ENCODE measurements at regions of chr20 and their contacts with region 1.

Region 1: GRCh38 chr20:3316136-3316535 is 77.1 kb upstream of the SLC4A11 start:
- DNase-seq: no peak
- H3K4me3 ChIP-seq: no peak overlapping the region
- H3K4me3 Mint-ChIP-seq: no peak overlapping the region
- H3K27ac ChIP-seq: no peak overlapping the region
- H3K27ac Mint-ChIP-seq: no peak overlapping the region
- H3K4me1 ChIP-seq: no peaks in the 10 kb centered on the region
- H3K4me1 Mint-ChIP-seq: no peaks in the 10 kb centered on the region
- H3K27me3 ChIP-seq: no peaks in the 10 kb centered on the region
- H3K27me3 Mint-ChIP-seq: no peaks in the 10 kb centered on the region

Region 2: DNA sequence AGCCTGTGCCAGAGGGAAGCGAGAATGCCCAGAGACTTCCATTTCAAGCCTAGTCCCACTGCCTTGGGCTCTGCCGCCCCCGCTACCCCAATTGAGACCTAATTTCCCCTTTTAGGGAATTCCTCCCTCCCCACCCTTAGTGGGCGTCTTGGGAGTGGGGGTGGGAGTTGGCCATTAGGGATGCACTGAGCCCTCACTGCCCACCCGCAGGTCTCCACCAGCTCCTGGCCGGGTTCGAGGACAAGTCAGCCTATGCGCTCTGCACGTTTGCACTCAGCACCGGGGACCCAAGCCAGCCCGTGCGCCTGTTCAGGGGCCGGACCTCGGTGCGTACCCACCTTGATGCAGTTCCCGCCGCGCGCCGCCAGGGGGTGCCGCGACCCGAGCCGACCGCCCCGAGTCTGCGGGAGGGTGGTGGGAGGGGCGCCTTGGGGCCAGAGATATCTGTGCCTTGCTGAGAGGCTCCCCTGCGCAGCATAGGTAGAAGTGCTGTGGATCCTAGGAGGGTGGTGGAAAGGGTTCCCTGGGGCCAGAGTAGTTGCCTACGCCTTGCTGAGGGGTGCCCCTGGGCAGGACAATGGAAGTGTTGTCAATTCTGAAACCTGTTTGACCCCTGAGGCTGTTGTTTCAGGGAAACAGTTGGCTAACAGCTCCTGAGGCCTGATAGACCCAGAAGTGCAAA is 97.7 kb before region 1 on chr20:
- CTCF ChIA-PET with region 1: interaction called, 12 read pairs
- POLR2A ChIA-PET with region 1: no interaction called
- DNase-seq: peak; percentile 54 to 78 (median 60)
- H3K4me3 ChIP-seq: no peak overlapping the region
- H3K4me3 Mint-ChIP-seq: no peak overlapping the region
- H3K27ac ChIP-seq: no peak overlapping the region
- H3K27ac Mint-ChIP-seq: no peak overlapping the region
- H3K4me1 ChIP-seq: peaks cover 14% of the 10 kb centered on the region
- H3K4me1 Mint-ChIP-seq: peaks cover 4 to 12% (median 6%) of the 10 kb centered on the region in 3 donors
- H3K27me3 ChIP-seq: no peaks in the 10 kb centered on the region
- H3K27me3 Mint-ChIP-seq: no peaks in the 10 kb centered on the region

Region 3: GRCh38 chr20:3358676-3359340 is 42.7 kb after region 1 on chr20:
- CTCF ChIA-PET with region 1: no interaction called
- POLR2A ChIA-PET with region 1: no interaction called
- DNase-seq: no peak
- H3K4me3 ChIP-seq: no peak overlapping the region
- H3K4me3 Mint-ChIP-seq: no peak overlapping the region
- H3K27ac ChIP-seq: no peak overlapping the region
- H3K27ac Mint-ChIP-seq: no peak overlapping the region
- H3K4me1 ChIP-seq: no peaks in the 10 kb centered on the region
- H3K4me1 Mint-ChIP-seq: no peaks in the 10 kb centered on the region
- H3K27me3 ChIP-seq: no peaks in the 10 kb centered on the region
- H3K27me3 Mint-ChIP-seq: no peaks in the 10 kb centered on the region

Measured in CD8-positive, alpha-beta memory T cell (primary cell).